K562 (cell line): ENCODE measurements at regions of chr5 and their contacts with region 1.

Region 1: GRCh38 chr5:31664566-31664965 is 25.6 kb downstream of the PDZD2 start:
- DNase-seq: peak; percentile 50 to 73 (median 60)
- ATAC-seq: peak; percentile 98
- H3K4me3 ChIP-seq: no peak overlapping the region
- H3K27ac ChIP-seq: no peak overlapping the region
- H3K4me1 ChIP-seq: no peaks in the 10 kb centered on the region
- H3K27me3 ChIP-seq: peaks cover 3 to 21% of the 10 kb centered on the region in 2 experiments; a peak in 3 of 5 replicates
- CTCF ChIP-seq: peak; percentile 73 to 93 (median 77)
- EP300 ChIP-seq: no peak
- POLR2A ChIP-seq: no peak
- RAD21 ChIP-seq: peak in 1 of 2 experiments; percentile 70; a peak in 2 of 4 replicates

Region 2: DNA sequence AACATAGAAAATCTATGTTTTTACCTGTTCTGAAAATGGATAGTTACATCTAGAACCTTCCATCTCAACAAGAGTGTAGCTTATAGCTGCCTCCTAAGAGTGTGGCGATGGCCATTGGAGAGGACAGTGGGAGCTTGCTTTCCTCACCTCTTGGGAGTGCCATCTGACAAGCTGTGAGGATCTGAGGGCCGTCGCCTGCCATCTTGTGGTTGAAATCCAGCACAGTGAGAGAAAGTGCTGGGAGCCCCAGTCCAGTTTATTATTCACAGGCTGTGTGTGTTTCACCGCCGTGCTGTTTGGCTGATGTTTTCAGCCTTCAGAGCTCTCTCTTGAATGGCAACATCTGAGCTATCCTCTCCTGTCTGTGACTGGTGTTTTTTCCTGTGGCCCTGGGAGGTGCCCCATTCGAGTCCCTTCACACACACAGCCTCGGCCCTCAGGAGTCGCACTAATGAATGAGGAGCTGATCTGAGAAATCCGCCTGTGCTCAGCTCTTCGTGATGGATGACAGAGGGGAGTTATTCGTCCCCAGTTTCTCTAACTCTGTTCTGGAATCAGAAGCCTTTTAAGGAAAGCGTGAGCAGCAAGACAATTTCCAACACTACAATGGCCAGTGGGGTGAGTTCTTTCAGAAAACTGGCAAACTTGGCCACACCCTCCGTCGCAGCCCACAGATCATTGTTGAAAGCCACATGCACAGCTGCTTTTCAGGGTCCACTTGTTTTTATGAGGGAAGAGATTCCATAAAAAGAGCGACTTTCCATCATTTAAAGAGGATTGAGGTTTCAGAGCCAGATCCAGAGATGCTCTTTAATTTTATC is 144.7 kb after region 1 on chr5:
- CTCF ChIA-PET with region 1: interaction called, 3 read pairs
- POLR2A ChIA-PET with region 1: no interaction called
- in situ Hi-C with region 1: no loop called
- intact Hi-C with region 1: loop called (anchors 2 kb)
- DNase-seq: peak; percentile 39 to 76 (median 57)
- ATAC-seq: peak; percentile 98
- H3K4me3 ChIP-seq: no peak overlapping the region
- H3K27ac ChIP-seq: no peak overlapping the region
- H3K4me1 ChIP-seq: no peaks in the 10 kb centered on the region
- H3K27me3 ChIP-seq: peaks cover 7 to 25% of the 10 kb centered on the region in 2 experiments; a peak in 3 of 5 replicates
- CTCF ChIP-seq: peak; percentile 74 to 98 (median 96)
- EP300 ChIP-seq: no peak
- POLR2A ChIP-seq: no peak
- RAD21 ChIP-seq: peak; percentile 76 to 87

Region 3: DNA sequence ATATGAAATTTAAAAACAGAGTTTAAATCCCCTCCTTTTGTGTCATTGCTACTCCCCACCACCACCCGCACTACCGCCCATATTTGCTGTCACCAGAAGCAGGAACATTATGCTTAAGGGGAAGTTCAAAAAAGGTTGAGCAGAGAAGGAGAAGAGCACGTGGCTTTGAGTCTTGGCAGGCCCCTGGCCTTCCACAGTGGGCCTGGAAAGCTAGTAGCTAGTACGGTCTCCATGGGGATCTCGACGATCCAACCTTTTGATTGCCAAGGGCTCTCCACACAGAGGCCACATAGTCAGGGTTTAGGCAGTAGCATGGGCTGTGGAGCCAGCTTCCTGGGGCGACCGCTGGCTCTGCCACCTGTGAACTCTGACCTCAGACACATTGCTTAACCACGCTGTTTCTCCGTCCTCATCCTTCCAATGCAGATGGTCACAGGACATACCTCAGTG is 419.4 kb after region 1 on chr5:
- CTCF ChIA-PET with region 1: no interaction called
- POLR2A ChIA-PET with region 1: no interaction called
- in situ Hi-C with region 1: no loop called
- intact Hi-C with region 1: loop called (anchors 10 kb)
- DNase-seq: no peak
- ATAC-seq: no peak; the same call in 1 of the 3 replicates
- H3K4me3 ChIP-seq: no peak overlapping the region
- H3K27ac ChIP-seq: no peak overlapping the region
- H3K4me1 ChIP-seq: peaks cover 0 to 6% of the 10 kb centered on the region in 2 experiments; a peak in 1 of 5 replicates
- H3K27me3 ChIP-seq: peaks cover 22 to 37% of the 10 kb centered on the region in 2 experiments
- CTCF ChIP-seq: no peak
- EP300 ChIP-seq: no peak
- POLR2A ChIP-seq: no peak
- RAD21 ChIP-seq: no peak